IMR-90 (cell line): ENCODE measurements at regions of chr9 and their contacts with region 1.

Region 1: DNA sequence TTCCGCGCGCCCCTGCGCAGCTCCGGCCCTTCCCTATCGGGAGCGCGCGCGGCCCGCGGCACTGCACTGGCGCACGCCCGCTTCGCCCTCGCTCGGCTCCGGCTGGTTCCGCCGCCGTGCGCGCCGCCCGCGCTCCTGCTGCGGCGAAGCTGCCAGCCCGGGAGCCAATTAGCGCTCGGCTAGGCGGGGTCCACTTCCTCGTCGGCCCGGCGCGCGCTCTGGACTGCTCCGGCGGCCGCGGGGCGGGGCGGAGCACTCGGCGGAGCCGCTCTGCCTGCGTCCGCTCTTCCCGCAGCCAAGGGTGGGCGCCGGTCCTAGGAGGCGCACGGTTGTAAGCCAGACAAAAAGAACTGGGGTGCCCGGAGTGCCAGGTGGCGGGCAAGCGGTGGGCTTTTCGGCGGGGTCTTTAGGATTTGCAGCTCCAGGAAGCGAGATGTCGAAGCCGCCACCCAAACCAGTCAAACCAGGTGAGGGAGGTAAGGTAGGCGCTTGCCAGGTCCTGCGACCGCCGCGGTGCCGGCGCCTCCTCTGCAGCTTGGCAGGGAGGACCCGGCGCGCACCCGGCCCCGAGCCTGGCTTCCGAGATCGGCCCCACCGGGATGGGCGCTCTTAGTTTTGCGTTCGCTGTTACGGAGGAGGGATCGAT is at the start of gene OSTF1:
- DNase-seq: peak; percentile 96
- ATAC-seq: peak; percentile 96
- H3K4me3 ChIP-seq: peak within 1 kb of the TSS; percentile 99
- H3K27ac ChIP-seq: peak within 1 kb of the TSS; percentile 80
- H3K4me1 ChIP-seq: peaks cover 2% of the 10 kb centered on the region; the same call in 1 of the 2 replicates
- H3K27me3 ChIP-seq: no peaks in the 10 kb centered on the region
- CTCF ChIP-seq: no peak
- POLR2A ChIP-seq: peak; percentile 72
- RAD21 ChIP-seq: no peak
- total RNA-seq, gene OSTF1: 41.6 and 50.0 TPM in 2 replicates

Region 2: GRCh38 chr9:74887041-74887980 is 201.1 kb before region 1 on chr9 and contains the start of gene TRPM6:
- CTCF ChIA-PET with region 1: no interaction called
- POLR2A ChIA-PET with region 1: no interaction called
- dilution Hi-C with region 1: no loop called
- in situ Hi-C with region 1: no loop called
- intact Hi-C with region 1: no loop called
- DNase-seq: peak; percentile 56
- ATAC-seq: peak; percentile 91
- H3K4me3 ChIP-seq: peak within 1 kb of the TSS; percentile 54
- H3K27ac ChIP-seq: no peak within 1 kb of the TSS
- H3K4me1 ChIP-seq: no peaks in the 10 kb centered on the region
- H3K27me3 ChIP-seq: no peaks in the 10 kb centered on the region; the same call in none of the 2 replicates
- CTCF ChIP-seq: no peak
- POLR2A ChIP-seq: no peak
- RAD21 ChIP-seq: no peak
- total RNA-seq, gene TRPM6: under 0.01 TPM in 2 replicates

Region 3: GRCh38 chr9:75185585-75186170 is 97.3 kb after region 1 on chr9:
- CTCF ChIA-PET with region 1: no interaction called
- POLR2A ChIA-PET with region 1: no interaction called
- dilution Hi-C with region 1: no loop called
- in situ Hi-C with region 1: no loop called
- intact Hi-C with region 1: loop called (anchors 2 kb)
- DNase-seq: no peak
- ATAC-seq: peak; percentile 49; the same call in 1 of the 2 replicates
- H3K4me3 ChIP-seq: no peak overlapping the region
- H3K27ac ChIP-seq: no peak overlapping the region
- H3K4me1 ChIP-seq: no peaks in the 10 kb centered on the region
- H3K27me3 ChIP-seq: no peaks in the 10 kb centered on the region; the same call in 1 of the 2 replicates
- CTCF ChIP-seq: peak; percentile 30; the same call in 1 of the 2 replicates
- POLR2A ChIP-seq: no peak
- RAD21 ChIP-seq: no peak

Region 4: GRCh38 chr9:75238311-75238978 is 150.1 kb after region 1 on chr9:
- CTCF ChIA-PET with region 1: no interaction called
- POLR2A ChIA-PET with region 1: no interaction called
- dilution Hi-C with region 1: no loop called
- in situ Hi-C with region 1: no loop called
- intact Hi-C with region 1: loop called (anchors 5 kb)
- DNase-seq: peak; percentile 68
- ATAC-seq: peak; percentile 99
- H3K4me3 ChIP-seq: no peak overlapping the region
- H3K27ac ChIP-seq: no peak overlapping the region
- H3K4me1 ChIP-seq: no peaks in the 10 kb centered on the region
- H3K27me3 ChIP-seq: no peaks in the 10 kb centered on the region
- CTCF ChIP-seq: peak; percentile 57
- POLR2A ChIP-seq: no peak
- RAD21 ChIP-seq: peak; percentile 51